AG04449 (cell line): ENCODE measurements at regions of chr13 and their contacts with region 1.

Region 1: DNA sequence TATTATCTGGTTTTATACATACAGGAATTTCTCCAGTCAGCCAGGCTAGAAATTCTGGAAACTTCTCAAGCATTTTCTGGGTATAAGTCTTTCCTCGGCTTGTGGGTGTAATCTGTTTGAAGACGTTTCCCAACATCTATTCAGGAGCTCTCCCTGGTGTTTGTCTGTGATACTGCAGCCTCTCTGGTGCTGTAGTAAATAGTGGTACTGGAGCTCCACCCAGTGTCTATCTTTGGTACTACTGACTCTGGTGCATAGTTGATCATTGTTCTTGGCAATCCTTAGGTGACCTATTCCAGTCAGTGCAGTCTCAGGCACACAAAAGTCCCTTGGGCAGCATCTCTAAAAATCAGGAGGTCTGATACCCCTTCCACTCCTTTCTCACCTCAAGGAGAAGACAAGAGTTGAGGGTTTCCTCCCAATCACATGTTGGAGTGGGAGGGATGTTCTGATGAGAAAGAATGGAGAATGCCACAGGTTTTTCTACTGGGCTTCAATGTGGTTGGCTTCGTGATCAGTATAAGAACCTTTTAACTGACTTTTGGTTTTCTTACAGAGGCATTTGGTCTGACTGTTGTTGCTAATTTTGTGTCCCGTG is 115.5 kb downstream of the CYSLTR2 start:
- DNase-seq: peak; percentile 67
- H3K4me3 ChIP-seq: no peak overlapping the region
- CTCF ChIP-seq: peak; percentile 94

Region 2: DNA sequence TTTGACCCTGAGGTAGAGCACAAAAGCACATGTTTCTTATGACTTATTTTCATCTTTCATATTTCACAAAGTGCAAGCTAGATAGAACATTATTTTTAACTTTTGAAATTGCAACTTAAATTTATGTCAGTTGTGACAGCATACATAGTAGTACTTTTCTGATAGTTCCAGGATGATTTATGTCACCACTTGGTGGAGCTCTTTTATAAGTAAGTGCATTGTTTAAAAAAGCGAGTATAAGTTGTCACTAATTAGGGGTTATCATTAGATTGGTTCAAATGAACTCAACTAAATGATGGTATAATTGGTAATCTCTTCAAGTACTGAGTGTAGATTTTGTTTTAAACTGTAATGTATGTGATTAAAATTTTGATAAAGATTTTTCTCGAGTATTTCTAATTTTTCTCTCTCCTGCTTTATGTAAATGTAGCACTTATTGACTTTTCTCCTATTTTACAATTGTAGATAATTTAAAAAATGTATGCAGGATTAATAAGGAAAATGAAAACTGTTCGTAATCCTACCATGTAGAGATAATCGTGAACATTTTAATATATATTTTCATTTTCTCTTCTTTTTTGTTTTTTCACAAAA is 434.6 kb before region 1 on chr13:
- CTCF ChIA-PET with region 1: interaction called, 18 read pairs
- POLR2A ChIA-PET with region 1: no interaction called
- DNase-seq: no peak
- H3K4me3 ChIP-seq: no peak overlapping the region
- CTCF ChIP-seq: peak; percentile 6

Region 3: GRCh38 chr13:48585456-48585840 is 183.8 kb before region 1 on chr13:
- CTCF ChIA-PET with region 1: interaction called, 24 read pairs
- POLR2A ChIA-PET with region 1: no interaction called
- DNase-seq: no peak
- H3K4me3 ChIP-seq: no peak overlapping the region
- CTCF ChIP-seq: no peak

Region 4: DNA sequence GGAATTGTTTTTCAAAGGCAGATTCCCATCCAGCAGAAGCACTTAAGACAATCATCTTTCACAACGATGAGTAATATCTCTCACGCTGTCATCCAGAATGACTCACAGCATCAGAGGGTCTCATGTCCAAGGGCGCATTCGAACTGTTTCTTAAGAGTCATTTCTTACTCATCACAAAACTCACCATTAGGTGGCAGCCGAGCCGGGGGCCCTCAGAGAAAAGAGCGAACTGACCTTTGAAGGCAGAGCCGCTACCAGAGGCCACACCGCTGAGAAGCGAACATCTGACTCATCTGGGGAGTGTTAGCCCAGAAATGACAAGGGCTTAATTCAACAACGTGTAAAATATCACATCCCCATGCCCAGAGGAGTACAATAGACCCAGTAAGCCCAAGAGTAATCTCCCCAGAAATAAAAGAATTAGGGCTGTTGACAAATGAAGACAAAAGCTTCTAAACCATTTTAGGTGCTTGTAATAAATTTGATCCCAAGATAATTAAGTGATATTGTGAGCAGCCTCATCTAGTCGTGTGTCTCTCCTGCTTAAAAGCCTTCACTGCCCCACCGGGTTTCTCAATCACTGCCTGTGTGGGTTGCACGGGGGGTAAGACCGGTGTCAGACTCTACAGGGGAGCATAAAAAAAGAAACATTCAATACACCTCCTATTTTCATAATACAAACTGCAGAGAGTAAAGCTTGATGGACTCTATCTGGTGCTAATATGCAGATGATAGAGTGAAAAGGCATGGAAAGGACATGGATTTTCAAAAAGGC is 19.3 kb before region 1 on chr13:
- CTCF ChIA-PET with region 1: interaction called, 65 read pairs
- POLR2A ChIA-PET with region 1: no interaction called
- DNase-seq: peak; percentile 82
- H3K4me3 ChIP-seq: no peak overlapping the region
- CTCF ChIP-seq: peak; percentile 60

Region 5: GRCh38 chr13:48790199-48790598 is 21.0 kb after region 1 on chr13:
- CTCF ChIA-PET with region 1: no interaction called
- POLR2A ChIA-PET with region 1: no interaction called
- DNase-seq: no peak
- H3K4me3 ChIP-seq: no peak overlapping the region
- CTCF ChIP-seq: no peak